Cardiac septum (tissue), 1 donor: ENCODE measurements at regions of chr1 and their contacts with region 1.

Region 1: DNA sequence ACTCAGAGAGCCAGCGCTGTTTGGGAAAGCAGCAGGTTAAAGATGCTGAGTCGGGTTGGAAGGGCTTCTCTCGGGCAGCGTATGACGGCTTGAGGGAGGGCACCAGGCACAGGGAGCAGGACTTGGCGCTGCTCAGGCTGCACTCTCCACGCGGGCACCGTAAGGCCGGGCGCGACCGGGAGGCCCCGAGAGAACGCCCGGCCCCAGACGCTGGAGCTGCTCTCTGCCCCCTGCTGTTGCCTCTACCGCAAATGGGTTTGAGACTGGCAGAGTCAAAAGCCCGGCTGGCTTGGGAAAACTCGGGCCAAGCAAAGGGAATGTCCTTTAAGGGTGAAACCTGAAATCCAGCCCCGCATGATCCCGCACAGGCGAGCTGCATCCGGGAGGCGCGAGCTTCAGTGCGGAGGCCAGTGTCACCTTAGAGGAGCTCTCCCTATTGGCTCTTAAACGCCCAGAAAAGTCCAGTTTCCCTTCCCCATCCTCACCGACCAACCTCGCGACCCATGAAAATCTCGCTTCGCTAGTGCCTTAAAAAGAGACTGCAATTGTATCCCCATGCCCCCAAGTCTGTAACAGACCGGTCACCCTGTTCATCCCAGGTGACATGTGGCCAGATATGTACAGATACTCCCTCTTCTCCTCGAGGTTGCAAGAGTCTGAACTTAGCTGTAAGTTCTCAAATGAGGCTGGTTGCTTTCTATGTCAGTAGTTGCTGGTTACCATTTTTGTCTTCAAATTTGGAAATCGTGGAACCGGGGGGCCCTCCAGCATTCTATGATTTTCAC is 1.1 kb downstream of the PRRX1 start:
- DNase-seq: no peak

Region 2: DNA sequence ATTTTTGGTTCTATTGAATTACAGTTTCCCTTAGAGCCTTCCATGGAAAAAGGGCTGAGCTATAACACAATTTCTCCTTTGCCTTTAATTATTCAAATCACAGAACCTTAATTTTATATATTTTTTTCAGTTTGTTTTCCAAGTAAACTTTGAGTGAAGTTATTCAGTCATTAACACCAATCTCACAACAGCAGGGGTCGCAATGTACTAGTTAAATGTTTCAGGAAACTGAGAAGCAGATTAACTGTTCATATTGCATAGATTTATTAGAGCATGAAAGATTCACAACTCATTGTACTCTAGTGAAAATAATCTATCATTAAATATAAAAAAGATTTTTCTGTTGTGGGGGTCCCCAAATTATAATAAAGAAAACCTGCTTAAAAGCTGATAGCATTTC is 654.6 kb before region 1 on chr1:
- intact Hi-C with region 1: loop called (anchors 10 kb)
- DNase-seq: no peak

Region 3: DNA sequence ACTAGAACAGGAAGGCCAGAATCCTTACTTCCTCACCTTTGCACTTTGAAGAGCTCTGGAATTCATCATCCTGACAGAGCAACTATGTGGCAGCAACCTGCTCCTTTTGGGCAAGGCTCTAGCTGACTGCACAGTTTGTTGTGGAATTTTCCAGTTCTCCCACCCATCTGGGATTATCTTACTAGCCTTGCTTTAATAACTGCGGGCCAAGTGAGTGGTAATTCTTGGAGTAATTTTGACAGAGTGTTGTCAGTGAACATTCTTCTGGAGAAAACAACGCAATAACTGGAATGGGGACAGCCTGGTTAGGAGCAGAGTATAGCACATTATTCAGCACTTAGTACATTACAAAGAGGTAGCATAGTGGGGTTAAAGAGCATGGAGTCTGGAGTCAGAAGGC is 444.0 kb before region 1 on chr1:
- intact Hi-C with region 1: loop called (anchors 5 kb)
- DNase-seq: no peak

Region 4: DNA sequence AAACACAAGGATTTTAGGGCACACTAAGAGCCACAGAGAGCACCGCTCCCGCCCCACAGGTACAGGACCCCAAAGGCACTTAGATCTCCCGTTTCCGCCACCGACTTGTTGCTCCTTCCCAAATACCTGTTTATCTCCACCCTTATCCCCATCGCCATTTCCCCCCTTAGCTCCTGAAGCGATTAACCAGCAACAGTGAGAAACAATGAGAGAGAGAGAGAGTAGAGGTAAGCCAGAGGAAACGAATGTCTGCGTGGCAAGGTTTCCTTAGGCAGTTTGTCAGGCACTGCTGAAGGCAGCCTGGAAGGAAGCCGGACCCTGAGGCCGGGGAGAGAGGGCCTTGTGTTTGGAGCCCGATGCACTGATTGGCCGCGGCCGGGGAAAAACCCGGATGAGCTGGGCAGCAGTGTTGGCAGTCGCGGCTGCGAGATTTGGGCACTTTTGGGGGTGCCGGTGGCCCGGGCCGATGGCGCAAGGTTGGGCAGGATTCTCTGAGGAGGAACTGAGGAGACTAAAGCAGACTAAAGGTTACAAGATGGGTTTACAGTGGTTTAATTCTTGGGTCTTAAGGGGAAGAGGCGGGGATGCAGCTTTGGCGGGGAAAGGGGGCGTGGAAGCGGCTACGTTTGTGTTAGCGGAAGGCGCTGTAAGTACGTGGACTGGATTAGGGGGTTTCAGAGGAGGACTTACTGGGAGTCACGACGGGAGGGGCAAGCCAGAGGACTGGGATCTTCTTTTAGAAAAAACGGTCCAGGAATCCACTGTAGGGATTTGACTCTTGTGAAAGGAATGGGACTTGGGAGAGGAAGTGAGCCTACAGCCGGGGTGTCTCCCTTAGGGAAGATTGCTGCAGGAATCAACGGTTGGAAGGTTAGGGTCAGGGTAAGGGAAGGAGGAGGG is 133.0 kb before region 1 on chr1 and contains the start of gene GORAB:
- intact Hi-C with region 1: loop called (anchors 2 kb)
- DNase-seq: peak; percentile 96
- total RNA-seq, gene GORAB: 13.0 TPM

Region 5: DNA sequence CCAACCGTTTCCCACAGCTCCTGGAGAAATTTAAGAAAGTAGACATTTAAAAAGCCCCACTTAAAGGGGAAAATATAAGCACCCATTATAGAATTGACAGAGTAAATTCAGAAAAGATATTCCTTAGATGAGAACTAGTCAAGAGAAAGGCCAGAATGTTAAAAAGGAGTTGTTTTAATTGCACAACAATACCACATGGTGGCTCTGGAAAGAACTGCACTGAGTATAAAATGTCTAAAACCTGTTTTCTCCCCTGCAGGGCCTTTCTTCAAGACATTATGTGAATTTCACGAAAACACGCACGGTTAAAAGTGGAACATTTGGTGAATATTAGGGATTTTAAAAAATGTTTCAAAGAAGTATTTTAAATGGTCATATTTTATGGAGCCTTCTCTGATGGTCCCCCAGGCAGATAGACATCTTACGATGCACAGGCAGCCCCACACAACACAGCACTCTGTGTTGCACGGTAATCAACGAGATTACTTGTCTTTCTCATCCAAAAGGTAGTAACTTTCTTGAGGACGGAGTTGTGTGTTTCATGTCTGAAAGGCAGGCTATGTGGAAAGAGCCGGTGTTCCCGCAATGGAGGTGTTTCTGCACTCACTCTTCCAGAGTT is 100.8 kb after region 1 on chr1:
- intact Hi-C with region 1: loop called (anchors 5 kb)
- DNase-seq: no peak